Naive thymus-derived CD4-positive, alpha-beta T cell (primary cell): ENCODE measurements at regions of chr2 and their contacts with region 1.

Region 1: DNA sequence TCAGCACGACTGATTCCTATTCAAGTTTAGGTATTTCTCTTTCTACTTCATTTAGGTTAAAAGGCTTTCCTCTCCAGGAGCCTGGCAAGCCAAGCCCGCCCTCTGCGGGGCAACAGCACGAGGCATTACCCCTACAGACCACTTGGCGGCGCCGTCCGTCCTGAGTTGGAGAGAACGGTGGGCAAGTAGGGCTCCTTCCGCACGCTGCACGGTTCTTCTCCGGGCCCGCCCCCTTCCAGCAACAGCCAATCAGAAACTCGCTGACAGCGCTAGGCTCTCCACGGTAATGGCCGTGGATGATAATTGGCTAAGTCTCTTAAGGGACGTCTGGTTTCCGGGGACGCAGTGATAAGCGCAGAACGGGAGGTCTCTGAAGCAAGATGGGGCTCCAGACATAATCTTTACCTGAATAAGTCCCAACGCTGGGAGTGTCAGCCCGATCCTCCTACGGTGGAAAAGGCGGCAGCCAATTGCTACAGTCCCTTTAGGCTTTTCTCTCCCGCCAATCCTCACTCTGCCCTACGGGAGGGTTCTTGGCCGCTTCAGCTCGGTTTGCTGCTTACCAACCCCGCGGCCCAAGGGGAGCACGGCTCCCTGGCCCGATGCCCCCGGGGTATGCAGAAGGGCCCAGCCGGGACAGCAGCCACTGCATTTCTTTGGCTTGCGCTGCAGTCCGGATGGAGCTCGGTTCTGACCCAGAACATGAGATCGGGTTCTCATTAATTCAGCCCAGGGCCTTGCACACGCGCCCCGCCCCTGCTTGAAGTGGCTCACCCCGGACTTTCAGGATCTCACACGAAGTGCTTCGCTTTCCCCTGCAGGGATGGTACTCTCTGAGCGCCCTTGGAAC is 206.9 kb upstream of the PKDCC start:
- DNase-seq: peak; percentile 93 to 98 (median 97)
- ATAC-seq: peak; percentile 99
- H3K4me3 ChIP-seq: peak overlapping the region; percentile 90
- H3K4me3 Mint-ChIP-seq: peak overlapping the region; percentile 90 to 99 (median 95)
- H3K27ac ChIP-seq: peak overlapping the region; percentile 83
- H3K27ac Mint-ChIP-seq: peak overlapping the region; percentile 84 to 99 (median 96)
- H3K4me1 ChIP-seq: peaks cover 0 to 5% of the 10 kb centered on the region in 2 donors
- H3K4me1 Mint-ChIP-seq: peaks cover 6 to 16% (median 10%) of the 10 kb centered on the region in 7 donors
- H3K27me3 ChIP-seq: no peaks in the 10 kb centered on the region
- H3K27me3 Mint-ChIP-seq: peaks cover 18 to 34% (median 24%) of the 10 kb centered on the region in 5 donors

Region 2: DNA sequence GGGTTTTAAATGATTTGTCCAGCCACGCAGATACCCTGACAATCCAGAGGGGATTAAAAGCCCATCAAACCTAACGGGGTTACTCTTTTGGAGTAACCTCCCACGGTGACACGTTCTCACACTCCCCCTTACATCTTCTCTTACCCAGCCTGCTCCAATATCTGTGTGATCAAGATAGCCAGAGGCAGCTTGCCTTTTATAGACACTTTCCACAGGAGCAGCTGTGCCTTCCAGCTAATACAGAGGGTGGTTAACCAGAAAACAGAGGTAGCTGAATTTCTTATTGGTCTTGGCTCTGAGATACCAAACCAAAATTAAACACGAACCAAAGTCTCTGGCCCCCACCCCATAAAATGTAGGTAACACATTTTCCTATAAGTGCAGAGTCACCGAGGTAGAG is 26.0 kb before region 1 on chr2:
- CTCF ChIA-PET with region 1: no interaction called
- POLR2A ChIA-PET with region 1: no interaction called
- intact Hi-C with region 1: no loop called
- DNase-seq: no peak
- ATAC-seq: no peak
- H3K4me3 ChIP-seq: no peak overlapping the region
- H3K4me3 Mint-ChIP-seq: no peak overlapping the region
- H3K27ac ChIP-seq: no peak overlapping the region
- H3K27ac Mint-ChIP-seq: no peak overlapping the region
- H3K4me1 ChIP-seq: no peaks in the 10 kb centered on the region
- H3K4me1 Mint-ChIP-seq: no peaks in the 10 kb centered on the region
- H3K27me3 ChIP-seq: no peaks in the 10 kb centered on the region
- H3K27me3 Mint-ChIP-seq: peaks cover 4 to 52% (median 38%) of the 10 kb centered on the region in 5 donors

Region 3: GRCh38 chr2:42047488-42048298 is 206.8 kb after region 1 on chr2 and contains the start of gene PKDCC:
- CTCF ChIA-PET with region 1: no interaction called
- POLR2A ChIA-PET with region 1: no interaction called
- intact Hi-C with region 1: loop called in 1 of 2 experiments (anchors 1 kb)
- DNase-seq: peak in 4 of 9 donors; percentile 11 to 45 (median 16)
- ATAC-seq: peak; percentile 49
- H3K4me3 ChIP-seq: no peak within 1 kb of the TSS
- H3K4me3 Mint-ChIP-seq: peak within 1 kb of the TSS; percentile 53 to 85 (median 79)
- H3K27ac ChIP-seq: no peak within 1 kb of the TSS
- H3K27ac Mint-ChIP-seq: no peak within 1 kb of the TSS
- H3K4me1 ChIP-seq: no peaks in the 10 kb centered on the region
- H3K4me1 Mint-ChIP-seq: peaks cover 0 to 21% (median 4%) of the 10 kb centered on the region in 7 donors
- H3K27me3 ChIP-seq: peaks cover 0 to 3% of the 10 kb centered on the region in 2 donors
- H3K27me3 Mint-ChIP-seq: peaks cover 45 to 74% (median 58%) of the 10 kb centered on the region in 5 donors
- total RNA-seq, gene PKDCC: not detected

Region 4: GRCh38 chr2:42169100-42169873 is 328.4 kb after region 1 on chr2 and contains the start of gene EML4:
- CTCF ChIA-PET with region 1: no interaction called
- POLR2A ChIA-PET with region 1: no interaction called
- intact Hi-C with region 1: loop called (anchors 1 to 2 kb)
- DNase-seq: peak; percentile 82 to 98 (median 89)
- ATAC-seq: peak; percentile 97
- H3K4me3 ChIP-seq: peak within 1 kb of the TSS; percentile 88
- H3K4me3 Mint-ChIP-seq: peak within 1 kb of the TSS in 2 of 10 donors; percentile 26 to 49
- H3K27ac ChIP-seq: peak within 1 kb of the TSS; percentile 96
- H3K27ac Mint-ChIP-seq: peak within 1 kb of the TSS in 4 of 9 donors; percentile 75 to 94 (median 84)
- H3K4me1 ChIP-seq: peaks cover 15 to 21% of the 10 kb centered on the region in 2 donors
- H3K4me1 Mint-ChIP-seq: peaks cover 9 to 27% (median 12%) of the 10 kb centered on the region in 7 donors
- H3K27me3 ChIP-seq: no peaks in the 10 kb centered on the region
- H3K27me3 Mint-ChIP-seq: peaks cover 0 to 9% (median 0%) of the 10 kb centered on the region in 5 donors
- total RNA-seq, gene EML4: 91.1 to 167 (median 143) TPM

Region 5: GRCh38 chr2:42238644-42239288 is 397.8 kb after region 1 on chr2:
- CTCF ChIA-PET with region 1: no interaction called
- POLR2A ChIA-PET with region 1: no interaction called
- intact Hi-C with region 1: loop called in 1 of 2 experiments (anchors 2 kb)
- DNase-seq: peak in 6 of 9 donors; percentile 22 to 42 (median 30)
- ATAC-seq: peak; percentile 75
- H3K4me3 ChIP-seq: no peak overlapping the region
- H3K4me3 Mint-ChIP-seq: peak overlapping the region in 1 of 10 donors; percentile 9
- H3K27ac ChIP-seq: no peak overlapping the region
- H3K27ac Mint-ChIP-seq: peak overlapping the region in 2 of 9 donors; percentile 43 to 65
- H3K4me1 ChIP-seq: peaks cover 32 to 33% of the 10 kb centered on the region in 2 donors
- H3K4me1 Mint-ChIP-seq: peaks cover 28 to 97% (median 89%) of the 10 kb centered on the region in 7 donors
- H3K27me3 ChIP-seq: no peaks in the 10 kb centered on the region
- H3K27me3 Mint-ChIP-seq: no peaks in the 10 kb centered on the region

Region 6: GRCh38 chr2:42494355-42495233 is 653.7 kb after region 1 on chr2:
- CTCF ChIA-PET with region 1: no interaction called
- POLR2A ChIA-PET with region 1: no interaction called
- intact Hi-C with region 1: loop called (anchors 1 to 10 kb)
- DNase-seq: peak; percentile 60 to 83 (median 77)
- ATAC-seq: peak; percentile 74
- H3K4me3 ChIP-seq: peak overlapping the region; percentile 60
- H3K4me3 Mint-ChIP-seq: peak overlapping the region; percentile 82 to 99 (median 96)
- H3K27ac ChIP-seq: peak overlapping the region; percentile 51
- H3K27ac Mint-ChIP-seq: peak overlapping the region; percentile 37 to 93 (median 83)
- H3K4me1 ChIP-seq: peaks cover 0 to 10% of the 10 kb centered on the region in 2 donors
- H3K4me1 Mint-ChIP-seq: peaks cover 0 to 18% (median 10%) of the 10 kb centered on the region in 7 donors
- H3K27me3 ChIP-seq: no peaks in the 10 kb centered on the region
- H3K27me3 Mint-ChIP-seq: peaks cover 0 to 49% (median 5%) of the 10 kb centered on the region in 5 donors

Region 7: GRCh38 chr2:42663106-42663780 is 822.3 kb after region 1 on chr2:
- CTCF ChIA-PET with region 1: no interaction called
- POLR2A ChIA-PET with region 1: no interaction called
- intact Hi-C with region 1: loop called (anchors 2 to 5 kb)
- DNase-seq: peak; percentile 26 to 85 (median 75)
- ATAC-seq: peak; percentile 96
- H3K4me3 ChIP-seq: no peak overlapping the region
- H3K4me3 Mint-ChIP-seq: peak overlapping the region in 7 of 10 donors; percentile 31 to 69 (median 53)
- H3K27ac ChIP-seq: peak overlapping the region; percentile 43
- H3K27ac Mint-ChIP-seq: peak overlapping the region in 8 of 9 donors; percentile 29 to 95 (median 83)
- H3K4me1 ChIP-seq: peaks cover 0 to 5% of the 10 kb centered on the region in 2 donors
- H3K4me1 Mint-ChIP-seq: peaks cover 8 to 60% (median 25%) of the 10 kb centered on the region in 7 donors
- H3K27me3 ChIP-seq: no peaks in the 10 kb centered on the region
- H3K27me3 Mint-ChIP-seq: no peaks in the 10 kb centered on the region